OCI-LY7 (cell line): ENCODE measurements at regions of chr14 and their contacts with region 1.

Region 1: DNA sequence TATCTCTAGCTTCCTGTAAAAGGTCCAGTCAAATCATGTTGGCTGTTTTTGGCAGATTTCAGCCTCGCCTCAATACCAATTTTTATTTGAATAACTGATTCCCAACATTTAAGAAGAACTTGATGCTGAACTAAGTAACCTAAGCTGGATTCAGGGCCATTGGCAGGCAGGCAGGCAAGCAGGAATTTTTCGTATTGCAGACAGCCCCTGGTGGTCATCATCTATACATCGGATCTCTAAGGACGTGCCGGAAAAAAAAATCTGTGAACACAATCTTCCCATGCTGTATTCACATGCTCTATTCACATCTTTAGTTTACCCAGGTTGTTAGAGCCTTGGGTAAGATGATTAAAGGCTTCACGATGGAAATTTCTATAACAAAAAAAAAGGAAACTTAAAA is 7.0 kb downstream of the VCPKMT start:
- DNase-seq: no peak
- H3K4me3 ChIP-seq: no peak overlapping the region
- H3K27ac ChIP-seq: no peak overlapping the region
- H3K4me1 ChIP-seq: peaks cover 21% of the 10 kb centered on the region
- CTCF ChIP-seq: 0 out of 2 replicates have a peak, but pooled peaks have one; percentile 35

Region 2: DNA sequence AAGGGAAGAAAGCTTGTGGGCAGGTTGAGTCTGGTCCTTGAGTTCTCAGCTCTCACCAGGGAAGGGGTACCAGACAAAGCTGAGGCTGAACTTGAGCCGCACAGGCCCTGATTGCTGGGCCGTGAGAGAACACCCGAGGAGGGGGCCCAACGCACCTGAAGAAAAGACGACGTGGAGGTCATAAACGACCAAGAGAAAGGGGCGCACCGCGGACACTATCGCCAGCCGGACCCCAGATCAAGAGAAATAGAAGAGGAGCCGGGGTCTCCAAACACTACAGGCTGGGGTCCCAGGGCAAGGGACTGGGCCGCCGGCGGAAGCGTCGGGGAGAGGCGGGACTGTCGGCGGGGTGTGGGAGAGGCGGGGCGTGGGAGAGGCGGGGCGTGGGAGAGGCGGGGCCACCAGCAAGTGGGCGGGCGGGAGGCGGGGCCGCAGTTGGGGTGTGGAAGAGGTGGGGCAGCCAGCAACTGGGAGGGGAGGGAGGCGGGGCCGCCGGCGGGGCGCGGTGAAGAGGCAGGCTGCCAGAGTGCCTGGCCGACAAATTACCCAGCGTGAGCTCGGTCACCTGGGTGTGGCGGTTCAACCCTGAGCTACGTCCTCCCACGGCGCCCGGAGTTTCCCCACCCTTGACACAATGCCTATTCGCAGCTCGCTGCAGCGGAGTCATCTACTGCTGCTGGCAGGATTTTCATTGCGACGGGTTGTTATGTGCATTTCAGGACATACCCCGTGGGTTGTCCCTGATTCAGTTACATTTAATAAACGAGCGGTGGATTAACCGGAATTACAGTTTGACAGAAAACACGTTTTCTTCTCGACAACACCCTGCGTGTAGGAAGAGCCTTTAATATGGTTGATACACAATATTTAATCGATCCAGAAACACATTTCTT is 241.3 kb before region 1 on chr14:
- CTCF ChIA-PET with region 1: interaction called, 3 read pairs
- POLR2A ChIA-PET with region 1: interaction called, 11 read pairs
- intact Hi-C with region 1: loop called (anchors 1 kb)
- DNase-seq: peak; percentile 97
- H3K4me3 ChIP-seq: peak overlapping the region; percentile 71
- H3K27ac ChIP-seq: peak overlapping the region; percentile 75
- H3K4me1 ChIP-seq: peaks cover 50% of the 10 kb centered on the region
- CTCF ChIP-seq: no peak; the same call in 1 of the 2 replicates

Region 3: DNA sequence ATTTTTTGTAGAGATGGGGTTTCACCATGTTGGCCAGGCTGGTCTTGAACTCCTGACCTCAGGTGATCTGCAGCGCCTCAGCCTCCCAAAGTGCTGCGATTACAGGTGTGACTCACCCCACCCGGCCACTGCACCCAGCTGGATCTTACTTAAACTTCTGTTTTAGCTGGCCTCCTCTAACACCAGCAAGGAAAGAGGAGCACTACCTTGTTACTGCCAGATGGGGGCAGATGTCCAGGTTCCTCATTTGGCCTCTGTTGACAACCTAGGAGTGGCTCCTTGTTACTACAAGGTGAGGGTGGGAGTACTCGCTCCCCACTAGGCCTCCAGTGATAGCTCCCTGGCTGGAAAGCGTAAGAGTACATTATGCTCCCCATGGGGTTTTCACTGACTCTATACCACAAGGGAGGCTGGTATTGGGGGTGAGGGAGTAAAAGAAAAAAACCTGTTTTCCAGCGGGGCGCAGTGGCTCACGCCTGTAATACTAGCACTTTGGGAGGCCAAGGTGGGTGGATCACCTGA is 229.6 kb before region 1 on chr14:
- CTCF ChIA-PET with region 1: no interaction called
- POLR2A ChIA-PET with region 1: no interaction called
- intact Hi-C with region 1: loop called (anchors 1 kb)
- DNase-seq: peak; percentile 90
- H3K4me3 ChIP-seq: peak overlapping the region; percentile 13
- H3K27ac ChIP-seq: peak overlapping the region; percentile 56
- H3K4me1 ChIP-seq: peaks cover 25% of the 10 kb centered on the region
- CTCF ChIP-seq: peak; percentile 83

Region 4: GRCh38 chr14:51020024-51020710 is 910.8 kb after region 1 on chr14:
- CTCF ChIA-PET with region 1: no interaction called
- POLR2A ChIA-PET with region 1: no interaction called
- intact Hi-C with region 1: no loop called
- DNase-seq: no peak
- H3K4me3 ChIP-seq: no peak overlapping the region
- H3K27ac ChIP-seq: no peak overlapping the region
- H3K4me1 ChIP-seq: no peaks in the 10 kb centered on the region
- CTCF ChIP-seq: no peak